CD14-positive monocyte (primary cell): ENCODE measurements at regions of chr9 and their contacts with region 1.

Region 1: GRCh38 chr9:125558453-125559092 is 148.4 kb downstream of the MAPKAP1 start:
- DNase-seq: peak; percentile 49 to 73 (median 66)
- H3K4me3 ChIP-seq: no peak overlapping the region
- H3K4me3 Mint-ChIP-seq: no peak overlapping the region
- H3K27ac ChIP-seq: no peak overlapping the region
- H3K27ac Mint-ChIP-seq: peak overlapping the region in 1 of 7 donors; percentile 77
- H3K4me1 ChIP-seq: no peaks in the 10 kb centered on the region
- H3K4me1 Mint-ChIP-seq: peaks cover 7% of the 10 kb centered on the region
- H3K27me3 ChIP-seq: no peaks in the 10 kb centered on the region
- H3K27me3 Mint-ChIP-seq: no peaks in the 10 kb centered on the region
- CTCF ChIP-seq: peak; percentile 80

Region 2: DNA sequence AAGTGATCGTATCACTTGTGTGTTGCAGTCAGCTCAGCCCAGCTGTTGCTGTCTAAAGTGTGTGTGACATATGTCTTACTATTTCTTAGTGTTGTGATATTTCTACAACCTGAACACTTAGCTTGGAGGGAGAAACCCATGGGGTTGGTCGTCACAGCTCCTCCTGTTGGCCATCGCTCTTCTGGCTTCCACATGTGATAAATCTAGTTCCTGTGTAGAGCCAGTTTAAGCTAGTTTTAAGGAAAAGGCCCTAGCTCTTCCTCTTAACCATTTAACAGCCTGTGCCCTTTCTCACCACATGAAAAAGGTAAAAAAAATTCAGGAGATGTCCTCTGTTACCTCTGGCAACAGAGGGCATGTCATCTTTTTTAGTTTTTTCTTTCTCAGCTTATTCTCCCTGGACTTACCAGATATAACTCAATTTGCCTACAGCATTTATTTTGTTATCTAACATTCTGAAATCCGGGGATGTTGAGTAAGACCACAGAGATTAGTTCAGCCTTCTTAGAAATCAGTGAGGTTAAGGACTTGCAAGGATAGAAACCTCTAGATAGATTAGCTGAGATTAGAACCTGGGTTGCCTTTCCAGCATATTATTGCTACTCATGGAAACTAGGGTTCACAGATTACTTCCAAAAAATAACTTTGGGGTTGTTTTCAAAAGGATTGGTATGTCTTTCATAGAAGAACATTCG is 196.6 kb before region 1 on chr9:
- intact Hi-C with region 1: no loop called
- DNase-seq: peak in 1 of 3 donors; percentile 3
- H3K4me3 ChIP-seq: no peak overlapping the region
- H3K4me3 Mint-ChIP-seq: no peak overlapping the region
- H3K27ac ChIP-seq: no peak overlapping the region
- H3K27ac Mint-ChIP-seq: no peak overlapping the region
- H3K4me1 ChIP-seq: no peaks in the 10 kb centered on the region
- H3K4me1 Mint-ChIP-seq: peaks cover 4% of the 10 kb centered on the region
- H3K27me3 ChIP-seq: no peaks in the 10 kb centered on the region
- H3K27me3 Mint-ChIP-seq: peaks cover 0 to 2% (median 0%) of the 10 kb centered on the region in 3 donors
- CTCF ChIP-seq: peak; percentile 14

Region 3: DNA sequence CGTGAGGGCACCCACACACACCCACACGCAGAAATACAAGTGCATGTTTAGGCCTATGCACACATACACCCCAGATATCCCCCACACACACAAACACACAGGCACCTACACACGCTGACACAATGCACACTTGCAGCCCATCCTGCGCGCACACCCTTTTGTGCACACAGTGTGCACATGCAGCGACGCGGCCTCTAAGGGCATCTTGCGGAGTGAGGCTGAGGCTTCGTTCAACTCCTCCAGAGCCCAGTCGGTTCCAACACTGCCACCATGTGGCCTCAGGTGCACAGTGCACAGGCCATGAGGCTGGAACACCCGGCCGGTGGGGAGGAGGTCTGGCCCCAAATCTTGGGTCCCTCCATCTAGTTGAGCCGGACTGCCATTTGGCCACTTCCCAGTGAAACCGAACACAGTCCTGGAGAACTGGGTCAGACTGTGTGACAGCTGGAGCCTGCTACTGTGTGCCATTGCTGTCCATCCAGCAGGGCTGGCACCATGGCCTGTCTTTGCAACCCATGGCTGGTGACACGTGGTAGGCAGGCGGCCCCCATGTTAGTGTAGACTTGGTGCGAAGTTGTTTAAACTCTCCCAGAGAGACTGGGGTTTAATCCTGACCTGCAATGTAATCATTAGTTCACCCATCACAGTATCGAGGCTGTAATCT is 670.3 kb after region 1 on chr9:
- intact Hi-C with region 1: loop called (anchors 5 to 10 kb)
- DNase-seq: peak; percentile 27 to 45 (median 41)
- H3K4me3 ChIP-seq: no peak overlapping the region
- H3K4me3 Mint-ChIP-seq: no peak overlapping the region
- H3K27ac ChIP-seq: no peak overlapping the region
- H3K27ac Mint-ChIP-seq: no peak overlapping the region
- H3K4me1 ChIP-seq: no peaks in the 10 kb centered on the region
- H3K4me1 Mint-ChIP-seq: peaks cover 2% of the 10 kb centered on the region
- H3K27me3 ChIP-seq: peaks cover 0 to 11% of the 10 kb centered on the region in 2 donors
- H3K27me3 Mint-ChIP-seq: peaks cover 15 to 37% (median 22%) of the 10 kb centered on the region in 3 donors
- CTCF ChIP-seq: peak; percentile 87

Region 4: DNA sequence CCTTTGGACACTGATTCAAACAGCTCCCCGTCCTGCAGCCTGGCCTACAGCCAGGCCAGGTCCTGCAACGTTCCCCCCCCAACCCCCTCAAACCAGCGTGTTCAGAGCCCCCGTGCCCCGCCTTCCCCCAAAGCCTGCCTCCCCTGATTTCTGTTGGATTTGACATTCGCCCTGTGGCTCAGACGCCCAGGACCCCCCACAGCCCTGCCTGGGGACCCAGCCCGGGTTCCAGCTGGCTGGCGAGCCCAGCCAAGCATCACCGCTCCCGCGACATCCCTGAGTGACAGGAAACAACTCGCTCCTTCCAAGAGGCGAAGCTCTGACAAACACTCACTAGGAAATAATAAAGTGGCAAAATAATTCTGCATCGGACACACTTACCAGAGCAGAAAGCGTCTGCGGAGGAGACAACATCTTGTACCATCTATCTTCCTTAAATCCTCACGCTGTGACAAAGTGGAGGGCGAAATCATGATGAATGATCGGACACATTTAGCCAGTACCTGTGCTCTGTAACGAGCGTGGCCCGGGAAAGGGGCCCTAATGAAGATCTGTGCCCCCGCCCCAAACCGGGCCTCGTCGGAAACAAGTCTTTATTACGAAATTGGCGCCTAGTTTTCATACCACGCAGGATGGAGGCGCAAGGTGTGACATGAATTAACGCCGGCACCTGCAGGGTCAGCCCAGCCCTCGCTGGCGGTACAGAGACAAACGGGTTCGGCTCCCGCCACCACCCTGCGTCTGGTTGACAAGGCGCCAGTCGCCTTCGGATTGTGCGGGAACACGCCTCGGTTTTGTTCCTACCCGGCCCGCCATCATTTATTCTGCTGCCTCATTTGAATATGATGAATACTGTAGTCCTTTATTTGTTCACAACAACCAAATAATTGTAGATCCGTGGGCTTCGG is 677.0 kb after region 1 on chr9:
- intact Hi-C with region 1: loop called in 1 of 2 experiments (anchors 10 kb)
- DNase-seq: no peak
- H3K4me3 ChIP-seq: no peak overlapping the region
- H3K4me3 Mint-ChIP-seq: no peak overlapping the region
- H3K27ac ChIP-seq: no peak overlapping the region
- H3K27ac Mint-ChIP-seq: no peak overlapping the region
- H3K4me1 ChIP-seq: no peaks in the 10 kb centered on the region
- H3K4me1 Mint-ChIP-seq: no peaks in the 10 kb centered on the region
- H3K27me3 ChIP-seq: no peaks in the 10 kb centered on the region
- H3K27me3 Mint-ChIP-seq: peaks cover 2 to 8% (median 4%) of the 10 kb centered on the region in 3 donors
- CTCF ChIP-seq: no peak